Naive thymus-derived CD4-positive, alpha-beta T cell (primary cell): ENCODE measurements at regions of chr11 and their contacts with region 1.

Region 1: DNA sequence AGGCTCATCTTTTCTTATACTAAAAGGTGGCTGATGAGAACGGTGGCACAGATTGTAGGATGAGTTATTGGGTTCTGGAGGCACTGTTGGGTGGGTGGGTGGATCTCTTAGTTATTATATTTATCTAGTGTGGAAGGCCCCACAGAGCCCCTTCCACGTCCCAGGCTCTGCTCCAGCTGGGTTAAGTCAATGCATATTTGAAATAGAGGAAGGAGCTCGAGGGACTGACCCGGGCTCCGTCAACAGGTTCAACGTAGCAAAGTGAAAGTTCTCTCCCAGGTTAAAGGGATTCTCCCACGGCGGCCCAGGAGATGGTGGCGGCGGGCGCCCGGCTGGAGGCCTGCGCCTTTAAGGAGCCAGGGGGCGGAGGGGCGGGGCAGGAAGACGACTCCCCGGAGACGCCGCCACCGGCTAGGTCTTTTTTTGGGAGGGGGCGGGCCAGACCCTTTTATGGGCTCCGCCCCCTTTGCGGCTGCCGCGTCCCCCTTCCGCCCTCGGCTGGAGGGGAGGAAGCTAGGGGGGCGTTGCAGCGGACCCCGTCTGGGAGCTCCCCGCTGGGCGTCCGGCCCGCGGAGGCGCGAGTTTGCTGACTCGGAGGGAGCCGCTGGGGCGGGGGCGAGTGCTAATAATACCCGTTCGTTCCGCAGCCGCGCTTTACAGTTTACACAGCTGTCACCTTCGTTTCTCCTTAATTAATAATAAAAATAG is 1.5 kb upstream of the INPPL1 start:
- DNase-seq: peak; percentile 81 to 97 (median 90)
- ATAC-seq: peak; percentile 89
- H3K4me3 ChIP-seq: peak overlapping the region; percentile 77
- H3K4me3 Mint-ChIP-seq: peak overlapping the region; percentile 88 to 99 (median 91)
- H3K27ac ChIP-seq: peak overlapping the region; percentile 88
- H3K27ac Mint-ChIP-seq: peak overlapping the region; percentile 76 to 95 (median 89)
- H3K4me1 ChIP-seq: peaks cover 10 to 12% of the 10 kb centered on the region in 2 donors
- H3K4me1 Mint-ChIP-seq: peaks cover 12 to 31% (median 24%) of the 10 kb centered on the region in 7 donors
- H3K27me3 ChIP-seq: no peaks in the 10 kb centered on the region
- H3K27me3 Mint-ChIP-seq: peaks cover 0 to 8% (median 5%) of the 10 kb centered on the region in 5 donors

Region 2: GRCh38 chr11:70270104-70270876 is 1952.8 kb before region 1 on chr11 and contains the start of gene PPFIA1:
- CTCF ChIA-PET with region 1: no interaction called
- POLR2A ChIA-PET with region 1: no interaction called
- intact Hi-C with region 1: loop called in 1 of 2 experiments (anchors 10 kb)
- DNase-seq: peak; percentile 93 to 99 (median 96)
- ATAC-seq: peak; percentile 99
- H3K4me3 ChIP-seq: peak within 1 kb of the TSS; percentile 95
- H3K4me3 Mint-ChIP-seq: peak within 1 kb of the TSS; percentile 89 to 94 (median 92)
- H3K27ac ChIP-seq: peak within 1 kb of the TSS; percentile 83
- H3K27ac Mint-ChIP-seq: peak within 1 kb of the TSS; percentile 63 to 96 (median 88)
- H3K4me1 ChIP-seq: peaks cover 4 to 21% of the 10 kb centered on the region in 2 donors
- H3K4me1 Mint-ChIP-seq: peaks cover 13 to 52% (median 42%) of the 10 kb centered on the region in 7 donors
- H3K27me3 ChIP-seq: no peaks in the 10 kb centered on the region
- H3K27me3 Mint-ChIP-seq: peaks cover 8 to 31% (median 14%) of the 10 kb centered on the region in 5 donors
- total RNA-seq, gene PPFIA1: 41.5 to 71.0 (median 52.3) TPM

Region 3: DNA sequence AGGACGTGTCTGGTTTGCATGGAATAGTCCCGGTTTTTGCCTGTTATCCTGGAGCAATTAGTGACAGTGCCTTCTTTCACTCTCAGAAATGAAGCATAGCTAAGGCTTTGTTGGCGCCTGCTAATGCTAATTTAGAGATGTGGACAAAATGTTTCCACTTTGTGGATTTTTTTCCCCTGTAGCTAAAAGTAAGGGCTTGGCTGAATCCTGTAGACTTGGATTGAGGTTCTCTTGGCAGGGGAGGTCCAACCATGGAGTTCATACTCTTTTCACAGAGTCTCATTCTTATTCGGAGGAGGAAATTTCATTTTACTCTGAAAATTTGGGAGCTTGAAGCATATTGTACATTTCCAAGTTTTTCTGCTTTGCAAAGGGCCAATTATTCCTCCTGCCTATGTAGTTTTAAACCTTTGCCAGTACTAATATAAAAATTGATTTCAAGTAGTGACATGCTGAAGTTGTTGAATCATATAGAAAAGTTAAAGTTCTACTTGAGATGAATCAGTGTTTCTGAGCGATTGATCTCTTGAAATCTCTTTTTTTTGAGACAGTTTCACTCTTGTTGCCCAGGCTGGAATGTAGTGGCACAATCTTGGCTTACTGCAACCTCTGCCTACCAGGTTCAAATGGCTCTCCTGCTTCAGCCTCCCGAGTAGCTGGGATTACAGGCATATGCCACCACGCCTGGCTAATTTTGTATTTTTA is 1932.5 kb before region 1 on chr11:
- CTCF ChIA-PET with region 1: no interaction called
- POLR2A ChIA-PET with region 1: no interaction called
- intact Hi-C with region 1: no loop called
- DNase-seq: no peak
- ATAC-seq: no peak
- H3K4me3 ChIP-seq: no peak overlapping the region
- H3K4me3 Mint-ChIP-seq: no peak overlapping the region
- H3K27ac ChIP-seq: no peak overlapping the region
- H3K27ac Mint-ChIP-seq: peak overlapping the region in 1 of 9 donors; percentile 17
- H3K4me1 ChIP-seq: no peaks in the 10 kb centered on the region
- H3K4me1 Mint-ChIP-seq: peaks cover 4 to 28% (median 9%) of the 10 kb centered on the region in 7 donors
- H3K27me3 ChIP-seq: no peaks in the 10 kb centered on the region
- H3K27me3 Mint-ChIP-seq: no peaks in the 10 kb centered on the region

Region 4: DNA sequence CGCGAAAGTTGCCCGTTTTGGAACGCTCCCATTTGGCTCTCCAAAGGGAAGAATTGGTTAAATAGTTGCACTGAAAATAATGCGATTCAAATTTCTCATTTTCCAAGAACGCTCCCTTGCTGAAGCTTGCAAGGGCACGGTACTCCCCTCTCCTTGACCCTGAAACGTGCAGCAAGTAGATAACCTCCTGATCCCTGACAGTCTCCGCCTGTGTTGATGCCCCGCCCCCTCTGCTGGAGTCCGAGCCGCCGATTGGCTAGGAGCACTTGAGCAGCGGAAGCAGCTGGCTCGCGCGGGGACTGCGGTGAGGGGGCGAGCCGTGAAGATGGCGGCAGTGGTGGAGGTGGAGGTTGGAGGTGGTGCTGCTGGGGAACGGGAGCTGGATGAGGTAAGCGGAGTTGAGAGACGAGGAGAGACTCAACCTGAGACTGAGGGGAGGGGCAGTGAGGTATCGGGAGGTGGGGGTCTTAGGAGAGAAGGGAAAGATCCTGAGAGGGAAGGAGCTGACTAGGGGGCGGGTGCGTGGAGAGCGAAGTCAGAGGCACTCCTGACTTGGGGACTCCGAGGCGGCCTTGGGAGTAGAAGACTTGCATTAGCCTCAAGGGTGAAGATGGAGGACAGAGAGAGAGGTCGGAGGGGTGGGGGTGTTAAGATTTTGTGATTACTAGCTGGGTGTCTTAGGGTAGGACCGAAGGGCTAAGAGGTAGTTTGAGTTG is 294.2 kb before region 1 on chr11 and contains the start of gene RNF121:
- CTCF ChIA-PET with region 1: no interaction called
- POLR2A ChIA-PET with region 1: interaction called, 8 read pairs
- intact Hi-C with region 1: loop called (anchors 1 kb)
- DNase-seq: peak; percentile 91 to 99 (median 96)
- ATAC-seq: peak; percentile 97
- H3K4me3 ChIP-seq: peak within 1 kb of the TSS; percentile 97
- H3K4me3 Mint-ChIP-seq: peak within 1 kb of the TSS; percentile 92 to 100 (median 98)
- H3K27ac ChIP-seq: peak within 1 kb of the TSS; percentile 88
- H3K27ac Mint-ChIP-seq: peak within 1 kb of the TSS; percentile 94 to 100 (median 98)
- H3K4me1 ChIP-seq: peaks cover 17 to 22% of the 10 kb centered on the region in 2 donors
- H3K4me1 Mint-ChIP-seq: peaks cover 26 to 70% (median 60%) of the 10 kb centered on the region in 7 donors
- H3K27me3 ChIP-seq: no peaks in the 10 kb centered on the region
- H3K27me3 Mint-ChIP-seq: no peaks in the 10 kb centered on the region
- total RNA-seq, gene RNF121: 18.2 to 37.2 (median 29.2) TPM

Region 5: GRCh38 chr11:72080256-72080974 is 142.6 kb before region 1 on chr11 and contains the starts of genes LRRC51 and NUMA1:
- CTCF ChIA-PET with region 1: no interaction called
- POLR2A ChIA-PET with region 1: no interaction called
- intact Hi-C with region 1: loop called (anchors 1 kb)
- DNase-seq: peak; percentile 88 to 100 (median 99)
- ATAC-seq: peak; percentile 94
- H3K4me3 ChIP-seq: peak within 1 kb of the TSS; percentile 88
- H3K4me3 Mint-ChIP-seq: peak within 1 kb of the TSS; percentile 80 to 95 (median 92)
- H3K27ac ChIP-seq: peak within 1 kb of the TSS; percentile 80
- H3K27ac Mint-ChIP-seq: peak within 1 kb of the TSS; percentile 93 to 100 (median 97)
- H3K4me1 ChIP-seq: peaks cover 10% of the 10 kb centered on the region in 2 donors
- H3K4me1 Mint-ChIP-seq: peaks cover 30 to 62% (median 58%) of the 10 kb centered on the region in 7 donors
- H3K27me3 ChIP-seq: no peaks in the 10 kb centered on the region
- H3K27me3 Mint-ChIP-seq: no peaks in the 10 kb centered on the region
- total RNA-seq, gene LRRC51: 1.2 to 7.8 (median 4.6) TPM
- total RNA-seq, gene NUMA1: 216 to 453 (median 266) TPM

Region 6: DNA sequence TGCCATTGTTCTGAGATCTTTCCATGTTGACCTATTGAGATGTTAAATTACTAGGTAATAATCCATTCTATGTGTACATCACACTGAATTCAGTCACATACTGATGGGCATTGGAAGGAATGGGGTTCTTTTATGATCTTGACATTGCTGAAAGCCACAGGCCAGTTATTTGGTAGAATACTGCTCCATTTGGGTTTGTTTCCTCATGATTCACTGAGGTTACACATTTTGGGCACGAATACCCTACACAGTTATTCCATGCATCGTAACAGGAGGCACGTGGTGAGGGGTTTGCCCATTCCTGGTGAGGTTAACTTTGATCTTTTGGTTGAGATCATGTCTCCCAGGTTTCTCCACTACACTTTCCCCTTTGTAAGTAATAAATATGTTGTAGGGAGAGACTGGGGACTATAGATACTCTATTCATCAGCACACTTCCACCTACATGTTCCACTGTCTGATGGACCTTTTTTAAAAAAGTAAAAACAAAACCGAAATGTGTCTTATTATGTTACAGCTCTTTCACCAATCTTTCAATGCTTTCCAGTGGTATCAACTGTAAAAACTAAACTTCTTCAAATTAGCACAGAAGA is 43.2 kb before region 1 on chr11:
- CTCF ChIA-PET with region 1: interaction called, 3 read pairs
- POLR2A ChIA-PET with region 1: no interaction called
- intact Hi-C with region 1: loop called in 1 of 2 experiments (anchors 1 kb)
- DNase-seq: no peak
- ATAC-seq: no peak
- H3K4me3 ChIP-seq: no peak overlapping the region
- H3K4me3 Mint-ChIP-seq: no peak overlapping the region
- H3K27ac ChIP-seq: no peak overlapping the region
- H3K27ac Mint-ChIP-seq: no peak overlapping the region
- H3K4me1 ChIP-seq: no peaks in the 10 kb centered on the region
- H3K4me1 Mint-ChIP-seq: peaks cover 0 to 5% (median 3%) of the 10 kb centered on the region in 7 donors
- H3K27me3 ChIP-seq: no peaks in the 10 kb centered on the region
- H3K27me3 Mint-ChIP-seq: peaks cover 6 to 24% (median 10%) of the 10 kb centered on the region in 5 donors

Region 7: GRCh38 chr11:72969894-72970335 is 746.9 kb after region 1 on chr11:
- CTCF ChIA-PET with region 1: no interaction called
- POLR2A ChIA-PET with region 1: no interaction called
- intact Hi-C with region 1: loop called in 1 of 2 experiments (anchors 2 kb)
- DNase-seq: no peak
- ATAC-seq: peak; percentile 77
- H3K4me3 ChIP-seq: no peak overlapping the region
- H3K4me3 Mint-ChIP-seq: peak overlapping the region in 1 of 10 donors; percentile 42
- H3K27ac ChIP-seq: no peak overlapping the region
- H3K27ac Mint-ChIP-seq: peak overlapping the region in 1 of 9 donors; percentile 47
- H3K4me1 ChIP-seq: peaks cover 0 to 15% of the 10 kb centered on the region in 2 donors
- H3K4me1 Mint-ChIP-seq: peaks cover 6 to 51% (median 22%) of the 10 kb centered on the region in 7 donors
- H3K27me3 ChIP-seq: no peaks in the 10 kb centered on the region
- H3K27me3 Mint-ChIP-seq: no peaks in the 10 kb centered on the region

Region 8: GRCh38 chr11:73647459-73648100 is 1424.5 kb after region 1 on chr11:
- CTCF ChIA-PET with region 1: no interaction called
- POLR2A ChIA-PET with region 1: no interaction called
- intact Hi-C with region 1: loop called in 1 of 2 experiments (anchors 5 kb)
- DNase-seq: peak; percentile 81 to 96 (median 94)
- ATAC-seq: peak; percentile 100
- H3K4me3 ChIP-seq: peak overlapping the region; percentile 62
- H3K4me3 Mint-ChIP-seq: peak overlapping the region; percentile 71 to 96 (median 92)
- H3K27ac ChIP-seq: peak overlapping the region; percentile 71
- H3K27ac Mint-ChIP-seq: peak overlapping the region; percentile 83 to 98 (median 94)
- H3K4me1 ChIP-seq: peaks cover 7 to 15% of the 10 kb centered on the region in 2 donors
- H3K4me1 Mint-ChIP-seq: peaks cover 10 to 41% (median 34%) of the 10 kb centered on the region in 7 donors
- H3K27me3 ChIP-seq: no peaks in the 10 kb centered on the region
- H3K27me3 Mint-ChIP-seq: peaks cover 0 to 8% (median 0%) of the 10 kb centered on the region in 5 donors